ENCODE measurements at regions of chr2 and their contacts with region 1.

Region 1: GRCh38 chr2:45946023-45946422 is 294.5 kb downstream of the PRKCE start:
- DNase-seq: no peak
- H3K4me3 ChIP-seq: no peak overlapping the region
- H3K27ac ChIP-seq: no peak overlapping the region
- H3K4me1 ChIP-seq: no peaks in the 10 kb centered on the region
- H3K27me3 ChIP-seq: no peaks in the 10 kb centered on the region
- CTCF ChIP-seq: no peak
- POLR2A ChIP-seq: no peak

Region 2: GRCh38 chr2:44740678-44741077 is 1205.3 kb before region 1 on chr2:
- intact Hi-C with region 1: loop called (anchors 10 kb)
- DNase-seq: no peak
- H3K4me3 ChIP-seq: no peak overlapping the region
- H3K27ac ChIP-seq: no peak overlapping the region
- H3K4me1 ChIP-seq: no peaks in the 10 kb centered on the region
- H3K27me3 ChIP-seq: no peaks in the 10 kb centered on the region
- CTCF ChIP-seq: no peak
- POLR2A ChIP-seq: no peak

Region 3: DNA sequence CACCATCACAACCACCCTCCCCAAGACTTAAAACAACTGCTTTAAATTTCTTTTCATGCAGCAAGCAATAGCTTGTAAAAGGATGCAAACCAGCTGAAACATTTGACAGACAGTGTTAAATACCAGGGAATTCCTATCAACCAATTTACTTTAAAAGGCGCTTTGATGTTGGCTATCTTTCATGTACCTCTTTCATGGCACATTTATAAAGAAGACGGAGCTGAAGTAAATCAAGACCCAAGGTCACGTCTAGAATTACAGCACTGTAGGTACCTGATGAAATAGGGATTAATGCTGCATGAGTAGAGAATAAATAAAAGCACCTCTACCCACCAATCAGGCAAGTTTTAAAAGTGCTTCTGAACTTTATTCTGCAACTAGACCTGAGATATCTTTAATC is 413.8 kb before region 1 on chr2:
- intact Hi-C with region 1: no loop called
- DNase-seq: no peak
- H3K4me3 ChIP-seq: no peak overlapping the region
- H3K27ac ChIP-seq: no peak overlapping the region
- H3K4me1 ChIP-seq: no peaks in the 10 kb centered on the region
- H3K27me3 ChIP-seq: no peaks in the 10 kb centered on the region
- CTCF ChIP-seq: no peak
- POLR2A ChIP-seq: no peak